ENCODE measurements at regions of chr1 and their contacts with region 1.

Region 1: DNA sequence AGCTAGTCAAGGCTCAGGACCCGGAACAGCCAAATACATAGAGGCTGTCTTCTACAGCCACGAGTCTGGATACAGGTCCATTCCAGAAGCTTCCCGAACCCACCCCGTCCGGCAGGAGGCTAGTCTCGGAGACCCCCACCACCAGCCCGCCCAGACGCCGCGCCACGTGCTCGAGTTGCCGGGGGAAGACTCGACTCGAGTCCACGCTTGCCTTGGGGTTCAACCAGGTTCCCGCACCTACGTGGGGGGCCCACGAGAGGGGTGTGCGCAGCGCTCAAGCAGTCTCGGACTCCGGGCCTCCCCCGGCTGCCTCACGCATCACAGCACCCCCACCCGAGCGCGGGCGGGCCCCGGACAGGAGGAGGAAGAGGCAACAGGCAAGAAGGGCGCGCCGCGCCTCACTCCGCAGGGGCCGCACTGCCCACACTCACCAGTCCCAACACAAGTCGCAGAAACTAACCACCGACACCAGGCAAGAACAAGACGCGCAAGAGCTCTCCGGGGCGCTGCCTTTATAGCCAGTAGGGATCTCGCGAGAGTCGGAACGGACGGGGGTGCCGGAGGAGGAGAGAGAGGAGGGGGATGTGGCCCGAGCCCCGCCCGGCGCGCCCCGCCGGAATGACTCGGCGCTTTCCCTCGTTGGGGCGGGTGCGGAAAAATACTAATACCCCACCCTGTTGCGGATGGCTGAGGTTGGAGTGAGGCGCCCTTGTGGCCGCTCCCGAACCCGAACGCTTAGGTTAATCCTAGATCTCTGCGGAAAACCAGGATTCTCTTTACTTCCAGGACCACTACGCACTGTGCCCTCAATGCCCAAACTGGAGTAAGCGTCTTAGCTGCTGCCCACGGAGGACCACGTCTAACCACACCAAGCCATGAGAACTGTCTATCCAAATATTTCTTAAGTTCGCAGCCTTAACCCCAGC is at the start of gene PRDX1:
- DNase-seq: peak; percentile 96
- ATAC-seq: peak; percentile 91
- H3K4me3 Mint-ChIP-seq: peak within 1 kb of the TSS; percentile 96
- H3K27ac Mint-ChIP-seq: peak within 1 kb of the TSS; percentile 87
- H3K4me1 Mint-ChIP-seq: peaks cover 34% of the 10 kb centered on the region
- H3K27me3 Mint-ChIP-seq: peaks cover 9% of the 10 kb centered on the region
- total RNA-seq, gene PRDX1: 250 to 251 TPM

Region 2: DNA sequence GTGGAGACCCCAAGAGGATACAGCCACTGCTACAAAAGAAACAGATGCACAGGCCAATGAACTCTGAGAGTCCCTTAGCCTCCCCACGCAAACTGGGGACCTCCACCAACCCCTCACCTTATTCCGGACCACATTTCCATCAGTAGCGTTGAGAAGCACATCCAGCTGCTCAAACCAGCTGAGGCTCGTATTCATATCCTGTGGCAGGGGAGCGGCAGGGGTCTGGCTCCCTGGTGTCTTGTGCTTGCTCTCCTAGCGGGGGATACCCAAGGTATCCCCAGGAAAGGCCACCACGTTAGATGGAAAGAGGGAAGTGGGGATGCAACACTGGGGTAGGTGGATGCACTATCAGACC is 22.3 kb before region 1 on chr1:
- CTCF ChIA-PET with region 1: interaction called, 3 read pairs
- POLR2A ChIA-PET with region 1: interaction called, 23 read pairs
- DNase-seq: no peak
- ATAC-seq: peak; percentile 7
- H3K4me3 Mint-ChIP-seq: peak overlapping the region; percentile 94
- H3K27ac Mint-ChIP-seq: peak overlapping the region; percentile 89
- H3K4me1 Mint-ChIP-seq: peaks cover 28% of the 10 kb centered on the region
- H3K27me3 Mint-ChIP-seq: no peaks in the 10 kb centered on the region

Region 3: GRCh38 chr1:45543581-45544417 is 22.1 kb after region 1 on chr1:
- CTCF ChIA-PET with region 1: interaction called, 5 read pairs
- POLR2A ChIA-PET with region 1: interaction called, 55 read pairs
- DNase-seq: peak; percentile 74
- ATAC-seq: peak; percentile 91
- H3K4me3 Mint-ChIP-seq: peak overlapping the region; percentile 28
- H3K27ac Mint-ChIP-seq: peak overlapping the region; percentile 36
- H3K4me1 Mint-ChIP-seq: peaks cover 32% of the 10 kb centered on the region
- H3K27me3 Mint-ChIP-seq: peaks cover 3% of the 10 kb centered on the region

Region 4: DNA sequence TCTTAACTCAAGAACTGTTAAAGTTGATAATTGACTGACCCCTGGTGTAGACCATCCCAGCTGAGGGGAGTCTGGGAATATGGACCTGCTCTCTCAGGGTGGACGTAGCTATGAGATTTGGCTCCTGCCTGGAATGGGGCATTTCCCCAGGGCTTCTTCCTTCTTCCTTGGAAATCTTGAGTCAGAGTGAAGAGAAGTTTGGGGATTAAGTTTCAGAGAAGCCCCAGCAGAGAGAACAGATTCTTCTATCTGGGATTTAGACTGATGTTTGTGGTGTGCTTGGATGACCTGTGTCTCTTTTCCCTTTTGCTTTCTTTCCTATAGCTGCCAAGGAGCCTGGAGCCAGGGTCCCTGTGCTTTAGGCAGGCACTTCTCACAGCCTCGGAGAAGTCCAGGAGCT is 42.2 kb after region 1 on chr1:
- CTCF ChIA-PET with region 1: interaction called, 70 read pairs
- POLR2A ChIA-PET with region 1: interaction called, 39 read pairs
- DNase-seq: no peak
- ATAC-seq: no peak
- H3K4me3 Mint-ChIP-seq: no peak overlapping the region
- H3K27ac Mint-ChIP-seq: no peak overlapping the region
- H3K4me1 Mint-ChIP-seq: peaks cover 6% of the 10 kb centered on the region
- H3K27me3 Mint-ChIP-seq: no peaks in the 10 kb centered on the region

Region 5: GRCh38 chr1:45583264-45583665 is 61.6 kb after region 1 on chr1:
- CTCF ChIA-PET with region 1: no interaction called
- POLR2A ChIA-PET with region 1: interaction called, 39 read pairs
- DNase-seq: peak; percentile 97
- ATAC-seq: peak; percentile 75
- H3K4me3 Mint-ChIP-seq: peak overlapping the region; percentile 99
- H3K27ac Mint-ChIP-seq: peak overlapping the region; percentile 100
- H3K4me1 Mint-ChIP-seq: peaks cover 26% of the 10 kb centered on the region
- H3K27me3 Mint-ChIP-seq: no peaks in the 10 kb centered on the region

Measured in activated CD8-positive, alpha-beta T cell treated with anti-CD3 and anti-CD28 coated beads, Interleukin-2, amount 10 ng/mL, durations not matched to agents 7 days and 5 days (primary cell).